GM10248 (cell line): ENCODE measurements at regions of chr13 and their contacts with region 1.

Region 1: GRCh38 chr13:51797664-51798488 is 6.1 kb downstream of the DHRS12 start:
- DNase-seq: peak; percentile 61
- CTCF ChIP-seq: peak; percentile 67

Region 2: DNA sequence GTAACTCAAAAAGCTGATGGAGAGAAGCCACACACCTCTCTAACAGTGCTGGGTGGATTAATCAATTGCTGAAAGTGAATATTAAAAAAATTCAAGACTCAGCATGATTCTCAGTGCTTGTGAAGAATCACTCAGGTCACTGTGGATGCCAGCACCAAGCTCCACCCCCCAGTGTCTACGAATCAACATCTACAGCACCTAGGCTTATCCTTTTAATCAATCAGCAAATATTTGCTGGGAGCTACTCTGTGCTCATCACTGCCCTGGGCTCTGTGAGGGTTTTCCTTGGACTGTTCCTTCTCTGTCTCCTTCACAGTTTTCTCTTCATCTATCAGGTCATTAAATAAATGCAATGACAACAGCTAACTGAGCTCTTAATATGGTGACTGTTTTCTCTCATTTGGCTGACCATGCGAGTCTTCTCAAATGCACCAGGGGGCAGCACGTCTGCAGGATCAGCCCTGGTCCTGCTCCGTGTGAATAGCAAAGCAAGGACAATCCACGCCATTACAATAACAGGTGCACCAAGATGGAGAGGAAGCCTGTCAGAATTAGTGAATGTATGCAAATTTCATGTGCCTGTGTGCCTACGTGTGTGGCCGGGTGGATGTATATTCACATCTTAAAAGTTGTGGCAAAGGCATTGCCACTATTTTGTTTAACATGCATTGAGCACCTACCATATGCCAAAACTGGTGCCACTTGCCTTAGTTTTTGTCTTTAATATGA is 672.2 kb before region 1 on chr13:
- CTCF ChIA-PET with region 1: interaction called, 92 read pairs
- POLR2A ChIA-PET with region 1: no interaction called
- DNase-seq: peak; percentile 54
- CTCF ChIP-seq: peak; percentile 78

Region 3: GRCh38 chr13:51419001-51419636 is 378.8 kb before region 1 on chr13:
- CTCF ChIA-PET with region 1: interaction called, 10 read pairs
- POLR2A ChIA-PET with region 1: no interaction called
- DNase-seq: no peak
- CTCF ChIP-seq: no peak

Region 4: DNA sequence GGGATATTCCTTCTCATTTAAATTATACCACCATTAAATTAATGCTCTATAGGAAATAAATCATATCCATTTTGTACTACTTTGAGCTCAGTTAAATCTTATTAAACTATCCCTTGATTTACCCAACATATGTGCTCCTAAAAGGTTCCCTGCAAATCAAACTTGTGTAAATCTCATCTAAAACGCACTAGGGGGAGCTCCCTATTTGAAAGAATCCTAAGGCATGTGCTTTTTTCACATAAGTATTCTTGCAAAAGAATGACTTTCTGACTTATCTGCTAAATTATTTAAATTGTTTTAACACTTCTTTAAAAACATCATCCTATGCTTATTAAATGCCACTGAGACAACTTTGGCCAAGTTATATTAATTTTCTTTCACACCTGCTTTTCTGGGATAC is 353.0 kb before region 1 on chr13:
- CTCF ChIA-PET with region 1: interaction called, 59 read pairs
- POLR2A ChIA-PET with region 1: no interaction called
- DNase-seq: no peak
- CTCF ChIP-seq: peak; percentile 10

Region 5: GRCh38 chr13:51681037-51681678 is 116.7 kb before region 1 on chr13:
- CTCF ChIA-PET with region 1: no interaction called
- POLR2A ChIA-PET with region 1: no interaction called
- DNase-seq: no peak
- CTCF ChIP-seq: no peak

Region 6: GRCh38 chr13:51704399-51705313 is 93.2 kb before region 1 on chr13:
- CTCF ChIA-PET with region 1: no interaction called
- POLR2A ChIA-PET with region 1: no interaction called
- DNase-seq: peak; percentile 45
- CTCF ChIP-seq: no peak

Region 7: DNA sequence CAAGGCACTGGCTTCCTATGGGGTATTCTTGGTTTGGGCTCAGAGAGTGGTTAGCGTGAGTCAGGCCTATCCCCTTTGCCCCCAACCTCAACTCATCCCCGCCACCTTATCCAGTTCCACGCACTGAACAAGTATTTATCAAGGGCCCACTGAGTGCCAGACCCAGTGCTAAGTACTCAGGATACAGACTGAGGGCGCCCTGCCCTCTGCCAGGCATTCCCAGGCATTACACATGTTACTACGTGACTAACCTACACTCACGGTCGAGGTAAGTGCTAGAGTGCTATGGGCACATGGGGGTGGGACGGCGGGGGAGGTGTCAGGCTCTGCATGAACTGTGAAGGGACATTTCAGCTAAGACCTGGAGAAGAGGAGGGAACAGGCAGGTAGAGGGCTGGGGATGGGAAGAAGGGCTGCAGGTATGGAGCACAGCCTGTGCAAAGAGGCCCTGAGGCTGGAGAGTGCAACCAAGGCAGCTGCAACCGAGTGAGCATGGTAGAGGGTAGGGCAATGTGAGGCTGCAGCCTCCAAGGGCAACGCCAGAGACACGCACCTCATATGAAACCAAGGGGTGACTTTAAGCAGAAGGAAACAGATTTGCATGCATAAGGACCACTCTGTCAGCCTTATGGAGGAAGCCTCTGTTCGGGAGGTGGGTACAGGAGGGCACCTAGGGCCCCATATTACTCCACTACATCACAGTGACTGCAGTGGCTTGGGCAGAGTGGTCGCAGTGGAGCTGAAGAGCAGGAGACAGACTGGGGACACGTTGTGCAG is 16.4 kb before region 1 on chr13:
- CTCF ChIA-PET with region 1: interaction called, 88 read pairs
- POLR2A ChIA-PET with region 1: no interaction called
- DNase-seq: peak; percentile 48
- CTCF ChIP-seq: peak; percentile 40